T-cell (primary cell): ENCODE measurements at regions of chr4 and their contacts with region 1.

Region 1: DNA sequence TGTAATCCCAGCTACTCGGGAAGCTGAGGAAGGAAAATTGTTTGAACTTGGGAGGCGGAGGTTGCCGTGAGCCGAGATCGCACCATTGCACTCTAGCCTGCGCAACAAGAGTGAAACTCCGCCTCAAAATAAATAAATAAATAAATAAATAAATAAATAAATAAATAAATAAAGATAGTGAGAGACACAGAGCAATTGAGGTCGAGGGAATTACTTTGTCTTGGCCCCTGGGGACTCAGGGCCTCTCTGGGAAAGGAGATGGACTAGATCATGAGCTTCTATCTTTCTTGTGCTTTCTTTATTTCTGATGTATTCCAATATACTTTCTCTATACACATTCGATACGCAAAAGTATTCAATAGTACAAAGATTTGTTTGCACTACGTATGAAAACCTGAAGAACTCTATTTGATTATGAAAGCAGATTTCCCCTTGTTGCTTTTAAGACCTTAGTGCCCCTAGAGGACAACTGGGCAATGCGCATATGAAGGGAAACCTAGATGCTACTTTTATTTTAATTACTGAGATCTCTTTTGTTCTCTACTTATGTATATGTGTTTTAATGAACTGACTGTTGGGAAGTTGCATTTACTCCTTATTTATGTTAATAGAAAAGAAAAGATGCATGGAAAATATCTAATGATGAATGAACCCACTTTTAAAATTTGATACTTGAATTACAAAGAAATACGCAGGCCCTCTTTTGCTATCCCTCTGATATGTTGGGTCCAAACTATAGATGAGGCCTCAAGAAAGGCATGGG is 12.8 kb upstream of the ELOVL6 start:
- DNase-seq: peak in 14 of 35 experiments; percentile 4 to 69 (median 26)
- ATAC-seq: peak; percentile 60 to 77 (median 62)
- H3K4me3 ChIP-seq: no peak overlapping the region
- H3K4me3 Mint-ChIP-seq: no peak overlapping the region
- H3K27ac ChIP-seq: no peak overlapping the region
- H3K27ac Mint-ChIP-seq: no peak overlapping the region
- H3K4me1 ChIP-seq: no peaks in the 10 kb centered on the region
- H3K4me1 Mint-ChIP-seq: peaks cover 0 to 3% (median 3%) of the 10 kb centered on the region in 3 donors
- H3K27me3 ChIP-seq: no peaks in the 10 kb centered on the region
- H3K27me3 Mint-ChIP-seq: peaks cover 0 to 3% of the 10 kb centered on the region in 2 donors

Region 2: GRCh38 chr4:110034026-110034393 is 177.2 kb before region 1 on chr4:
- CTCF ChIA-PET with region 1: interaction called in 1 of 2 experiments, 10 read pairs
- POLR2A ChIA-PET with region 1: no interaction called
- DNase-seq: peak in 1 of 35 experiments; percentile 4
- ATAC-seq: no peak
- H3K4me3 ChIP-seq: no peak overlapping the region
- H3K4me3 Mint-ChIP-seq: no peak overlapping the region
- H3K27ac ChIP-seq: no peak overlapping the region
- H3K27ac Mint-ChIP-seq: no peak overlapping the region
- H3K4me1 ChIP-seq: no peaks in the 10 kb centered on the region
- H3K4me1 Mint-ChIP-seq: peaks cover 0 to 5% (median 0%) of the 10 kb centered on the region in 3 donors
- H3K27me3 ChIP-seq: peaks cover 0 to 8% of the 10 kb centered on the region in 2 experiments
- H3K27me3 Mint-ChIP-seq: peaks cover 27 to 42% of the 10 kb centered on the region in 2 donors

Region 3: GRCh38 chr4:110049951-110050925 is 160.9 kb before region 1 on chr4:
- CTCF ChIA-PET with region 1: interaction called, 11 to 18 read pairs
- POLR2A ChIA-PET with region 1: interaction called in 1 of 2 experiments, 3 read pairs
- DNase-seq: peak; percentile 12 to 71 (median 37)
- ATAC-seq: peak; percentile 27 to 46 (median 40)
- H3K4me3 ChIP-seq: no peak overlapping the region
- H3K4me3 Mint-ChIP-seq: no peak overlapping the region
- H3K27ac ChIP-seq: no peak overlapping the region
- H3K27ac Mint-ChIP-seq: no peak overlapping the region
- H3K4me1 ChIP-seq: no peaks in the 10 kb centered on the region
- H3K4me1 Mint-ChIP-seq: peaks cover under 1 to 4% (median 2%) of the 10 kb centered on the region in 3 donors
- H3K27me3 ChIP-seq: no peaks in the 10 kb centered on the region
- H3K27me3 Mint-ChIP-seq: no peaks in the 10 kb centered on the region

Region 4: DNA sequence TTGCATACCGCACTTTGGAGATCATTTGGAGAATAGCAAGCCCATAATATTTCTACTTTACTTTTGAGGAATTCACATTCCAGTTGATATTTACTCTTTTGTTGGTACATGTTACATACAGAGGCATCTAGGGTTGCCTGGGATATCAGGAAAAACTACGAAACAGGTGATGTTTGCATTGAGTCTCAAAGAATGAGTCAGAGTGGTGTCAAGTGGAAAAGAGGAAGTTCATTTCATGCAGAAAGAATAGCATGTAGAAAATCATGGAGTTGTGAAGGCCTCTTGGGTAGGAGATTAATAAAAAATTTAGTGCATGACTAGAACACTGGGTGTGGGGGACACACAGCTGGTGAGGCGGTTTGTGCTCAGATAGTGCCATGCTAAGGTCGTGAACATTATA is 20.7 kb after region 1 on chr4:
- CTCF ChIA-PET with region 1: no interaction called
- POLR2A ChIA-PET with region 1: no interaction called
- DNase-seq: no peak
- ATAC-seq: no peak
- H3K4me3 ChIP-seq: no peak overlapping the region
- H3K4me3 Mint-ChIP-seq: no peak overlapping the region
- H3K27ac ChIP-seq: no peak overlapping the region
- H3K27ac Mint-ChIP-seq: no peak overlapping the region
- H3K4me1 ChIP-seq: no peaks in the 10 kb centered on the region
- H3K4me1 Mint-ChIP-seq: no peaks in the 10 kb centered on the region
- H3K27me3 ChIP-seq: no peaks in the 10 kb centered on the region
- H3K27me3 Mint-ChIP-seq: peaks cover 0 to 11% of the 10 kb centered on the region in 2 donors

Region 5: GRCh38 chr4:110245577-110245976 is 34.4 kb after region 1 on chr4:
- CTCF ChIA-PET with region 1: no interaction called
- POLR2A ChIA-PET with region 1: no interaction called
- DNase-seq: no peak
- ATAC-seq: no peak
- H3K4me3 ChIP-seq: no peak overlapping the region
- H3K4me3 Mint-ChIP-seq: no peak overlapping the region
- H3K27ac ChIP-seq: no peak overlapping the region
- H3K27ac Mint-ChIP-seq: no peak overlapping the region
- H3K4me1 ChIP-seq: no peaks in the 10 kb centered on the region
- H3K4me1 Mint-ChIP-seq: no peaks in the 10 kb centered on the region
- H3K27me3 ChIP-seq: peaks cover 0 to 5% of the 10 kb centered on the region in 2 experiments
- H3K27me3 Mint-ChIP-seq: peaks cover 0 to 8% of the 10 kb centered on the region in 2 donors